ENCODE measurements at regions of chr11 and their contacts with region 1.

Region 1: GRCh38 chr11:129895126-129896041 is at the start of gene NFRKB:
- DNase-seq: peak; percentile 75 to 95 (median 88)
- ATAC-seq: peak; percentile 99
- H3K4me3 ChIP-seq: peak within 1 kb of the TSS; percentile 76
- H3K4me3 Mint-ChIP-seq: peak within 1 kb of the TSS; percentile 86 to 96 (median 92)
- H3K27ac ChIP-seq: peak within 1 kb of the TSS; percentile 84
- H3K27ac Mint-ChIP-seq: peak within 1 kb of the TSS; percentile 82 to 95 (median 90)
- H3K4me1 ChIP-seq: peaks cover 9 to 18% of the 10 kb centered on the region in 2 donors
- H3K4me1 Mint-ChIP-seq: peaks cover 23 to 58% (median 44%) of the 10 kb centered on the region in 7 donors
- H3K27me3 ChIP-seq: no peaks in the 10 kb centered on the region
- H3K27me3 Mint-ChIP-seq: no peaks in the 10 kb centered on the region
- total RNA-seq, gene NFRKB: 40.4 to 81.3 (median 56.2) TPM

Region 2: DNA sequence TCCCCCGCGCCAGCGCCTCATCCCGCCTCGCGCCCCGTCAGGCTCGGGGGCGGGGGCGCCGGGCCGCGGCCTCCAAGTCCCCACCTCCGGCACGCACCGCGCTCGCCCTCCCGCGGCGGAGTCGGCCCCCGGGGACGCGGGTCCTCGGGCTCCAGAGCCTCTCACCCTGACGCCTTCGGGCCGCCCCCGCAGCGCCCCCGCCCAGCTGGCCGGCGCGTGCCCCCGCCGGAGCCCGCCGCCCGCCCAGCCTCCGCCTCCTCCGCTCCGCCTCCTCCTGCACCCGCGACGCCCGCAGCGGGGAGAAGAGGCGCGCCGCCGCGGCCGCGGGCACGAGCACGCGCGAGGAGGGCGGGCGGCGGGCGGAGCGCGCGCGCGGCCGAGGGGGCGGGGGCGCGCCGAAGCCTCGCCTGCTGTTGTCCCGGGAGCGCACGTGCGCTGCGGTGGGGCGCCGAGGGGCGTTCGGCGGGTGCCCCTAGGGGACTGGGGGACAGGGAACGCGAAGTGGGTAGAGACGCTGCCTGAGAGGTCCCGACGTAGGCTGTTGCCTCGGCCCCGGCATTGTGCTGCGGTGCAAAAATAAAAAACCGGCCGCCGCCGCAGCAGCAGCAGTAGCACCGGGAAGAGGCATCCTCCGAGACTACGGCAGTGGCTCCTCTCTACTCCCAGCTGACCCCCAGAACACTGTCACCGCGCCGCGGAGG is 615.9 kb before region 1 on chr11:
- CTCF ChIA-PET with region 1: no interaction called
- POLR2A ChIA-PET with region 1: no interaction called
- intact Hi-C with region 1: loop called (anchors 2 kb)
- DNase-seq: peak; percentile 70 to 90 (median 82)
- ATAC-seq: peak; percentile 94
- H3K4me3 ChIP-seq: peak overlapping the region; percentile 58
- H3K4me3 Mint-ChIP-seq: peak overlapping the region; percentile 74 to 91 (median 86)
- H3K27ac ChIP-seq: peak overlapping the region; percentile 49
- H3K27ac Mint-ChIP-seq: peak overlapping the region; percentile 69 to 91 (median 80)
- H3K4me1 ChIP-seq: peaks cover 4 to 6% of the 10 kb centered on the region in 2 donors
- H3K4me1 Mint-ChIP-seq: peaks cover 14 to 43% (median 33%) of the 10 kb centered on the region in 7 donors
- H3K27me3 ChIP-seq: peaks cover 0 to 3% of the 10 kb centered on the region in 2 donors
- H3K27me3 Mint-ChIP-seq: peaks cover 8 to 32% (median 17%) of the 10 kb centered on the region in 5 donors

Region 3: DNA sequence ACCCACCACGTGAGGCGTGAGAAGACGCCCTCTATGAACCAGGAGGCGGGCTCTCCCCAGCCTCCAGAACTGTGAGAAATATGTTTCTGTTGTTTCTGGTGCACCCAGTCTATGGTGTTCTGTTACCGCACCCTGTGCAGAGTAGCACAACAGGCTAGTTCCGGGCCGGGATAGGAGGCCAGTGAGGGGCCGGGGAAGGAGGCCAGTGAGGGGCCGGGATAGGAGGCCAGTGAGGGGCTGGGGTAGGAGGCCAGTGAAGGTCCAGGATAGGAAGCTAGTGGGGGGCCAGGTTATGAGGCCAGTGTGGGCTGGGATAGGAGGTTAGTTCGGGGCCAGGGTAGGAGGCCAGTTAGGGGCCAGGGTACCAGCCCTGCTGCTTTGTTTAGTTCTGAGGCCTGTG is 315.1 kb before region 1 on chr11:
- CTCF ChIA-PET with region 1: no interaction called
- POLR2A ChIA-PET with region 1: no interaction called
- intact Hi-C with region 1: no loop called
- DNase-seq: no peak
- ATAC-seq: peak; percentile 31
- H3K4me3 ChIP-seq: no peak overlapping the region
- H3K4me3 Mint-ChIP-seq: no peak overlapping the region
- H3K27ac ChIP-seq: no peak overlapping the region
- H3K27ac Mint-ChIP-seq: no peak overlapping the region
- H3K4me1 ChIP-seq: no peaks in the 10 kb centered on the region
- H3K4me1 Mint-ChIP-seq: peaks cover 0 to 4% (median 0%) of the 10 kb centered on the region in 7 donors
- H3K27me3 ChIP-seq: no peaks in the 10 kb centered on the region
- H3K27me3 Mint-ChIP-seq: peaks cover 0 to 24% (median 15%) of the 10 kb centered on the region in 5 donors

Region 4: GRCh38 chr11:129803533-129803932 is 91.9 kb before region 1 on chr11:
- CTCF ChIA-PET with region 1: no interaction called
- POLR2A ChIA-PET with region 1: interaction called, 4 read pairs
- intact Hi-C with region 1: loop called in 1 of 2 experiments (anchors 2 kb)
- DNase-seq: no peak
- ATAC-seq: no peak
- H3K4me3 ChIP-seq: no peak overlapping the region
- H3K4me3 Mint-ChIP-seq: peak overlapping the region; percentile 64 to 85 (median 78)
- H3K27ac ChIP-seq: peak overlapping the region; percentile 17
- H3K27ac Mint-ChIP-seq: peak overlapping the region; percentile 44 to 99 (median 91)
- H3K4me1 ChIP-seq: peaks cover 0 to 31% of the 10 kb centered on the region in 2 donors
- H3K4me1 Mint-ChIP-seq: peaks cover 25 to 90% (median 73%) of the 10 kb centered on the region in 7 donors
- H3K27me3 ChIP-seq: no peaks in the 10 kb centered on the region
- H3K27me3 Mint-ChIP-seq: peaks cover 0 to 37% (median 0%) of the 10 kb centered on the region in 5 donors

Region 5: DNA sequence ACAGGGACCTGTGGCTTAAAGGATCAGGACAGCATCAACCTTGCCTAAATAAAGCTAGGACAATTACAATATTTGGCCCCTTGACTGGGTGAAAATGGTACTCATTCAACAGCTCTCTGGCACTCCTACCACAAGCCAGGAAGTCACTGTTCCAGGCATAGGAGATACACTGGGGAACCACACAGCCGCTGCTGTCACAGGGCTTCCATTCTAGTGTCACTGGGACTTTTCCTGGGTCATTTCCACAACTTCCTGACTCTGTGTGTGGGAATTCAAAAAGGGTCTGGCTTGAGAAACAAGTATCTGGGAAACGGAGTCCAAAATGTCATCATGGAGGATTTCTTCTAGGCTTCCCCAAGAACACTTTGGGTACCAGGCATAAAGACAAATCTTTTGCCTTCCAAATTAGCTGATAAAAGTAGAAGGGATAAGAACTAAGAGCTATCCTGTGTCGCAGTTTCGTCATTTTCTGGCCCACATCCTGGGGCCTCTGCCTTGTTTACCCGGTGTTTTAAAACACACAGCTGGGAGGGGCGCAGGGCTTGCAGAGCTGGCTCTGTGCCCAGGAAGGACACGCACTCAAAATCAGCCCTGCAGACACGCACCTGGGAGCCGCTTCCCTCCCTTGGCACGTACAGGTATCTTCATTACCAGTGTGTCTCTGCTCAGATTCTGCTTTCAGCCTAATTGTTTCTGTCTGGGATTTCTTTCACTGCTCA is 41.7 kb before region 1 on chr11:
- CTCF ChIA-PET with region 1: interaction called, 3 read pairs
- POLR2A ChIA-PET with region 1: interaction called, 14 read pairs
- intact Hi-C with region 1: loop called (anchors 1 to 2 kb)
- DNase-seq: peak; percentile 34 to 96 (median 93)
- ATAC-seq: peak; percentile 94
- H3K4me3 ChIP-seq: peak overlapping the region; percentile 21
- H3K4me3 Mint-ChIP-seq: peak overlapping the region; percentile 49 to 84 (median 74)
- H3K27ac ChIP-seq: peak overlapping the region; percentile 68
- H3K27ac Mint-ChIP-seq: peak overlapping the region; percentile 94 to 99 (median 98)
- H3K4me1 ChIP-seq: peaks cover 14 to 24% of the 10 kb centered on the region in 2 donors
- H3K4me1 Mint-ChIP-seq: peaks cover 17 to 68% (median 51%) of the 10 kb centered on the region in 7 donors
- H3K27me3 ChIP-seq: no peaks in the 10 kb centered on the region
- H3K27me3 Mint-ChIP-seq: peaks cover 0 to 2% (median 0%) of the 10 kb centered on the region in 5 donors

Region 6: GRCh38 chr11:129881570-129882170 is 13.7 kb before region 1 on chr11:
- CTCF ChIA-PET with region 1: interaction called, 3 read pairs
- POLR2A ChIA-PET with region 1: interaction called, 13 read pairs
- intact Hi-C with region 1: loop called in 1 of 2 experiments (anchors 2 kb)
- DNase-seq: peak; percentile 24 to 54 (median 44)
- ATAC-seq: peak; percentile 71
- H3K4me3 ChIP-seq: no peak overlapping the region
- H3K4me3 Mint-ChIP-seq: no peak overlapping the region
- H3K27ac ChIP-seq: no peak overlapping the region
- H3K27ac Mint-ChIP-seq: peak overlapping the region in 2 of 9 donors; percentile 56 to 63
- H3K4me1 ChIP-seq: no peaks in the 10 kb centered on the region
- H3K4me1 Mint-ChIP-seq: peaks cover 0 to 20% (median 4%) of the 10 kb centered on the region in 7 donors
- H3K27me3 ChIP-seq: no peaks in the 10 kb centered on the region
- H3K27me3 Mint-ChIP-seq: no peaks in the 10 kb centered on the region

Region 7: DNA sequence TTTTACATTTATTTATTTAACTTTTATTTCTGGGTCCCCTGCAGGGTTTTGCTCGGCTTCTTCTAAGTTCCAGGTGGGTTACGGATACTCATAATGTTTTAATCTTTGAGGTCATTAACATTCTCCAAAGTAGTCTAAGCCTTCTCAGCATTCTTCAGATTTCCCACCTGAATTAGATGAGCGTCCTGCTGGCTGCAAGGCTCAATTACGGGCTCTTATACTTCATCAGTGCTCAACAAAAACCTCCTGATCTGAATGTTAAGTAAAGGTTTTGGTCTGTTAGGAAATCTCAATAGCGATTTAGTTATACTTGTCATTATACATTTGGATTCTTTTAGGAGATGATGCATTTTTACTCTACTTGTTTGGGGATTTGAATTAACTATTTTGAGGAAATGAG is 27.3 kb after region 1 on chr11:
- CTCF ChIA-PET with region 1: interaction called, 5 read pairs
- POLR2A ChIA-PET with region 1: interaction called, 4 read pairs
- intact Hi-C with region 1: loop called (anchors 2 kb)
- DNase-seq: peak in 1 of 9 donors; percentile 0
- ATAC-seq: no peak
- H3K4me3 ChIP-seq: no peak overlapping the region
- H3K4me3 Mint-ChIP-seq: peak overlapping the region in 1 of 10 donors; percentile 35
- H3K27ac ChIP-seq: no peak overlapping the region
- H3K27ac Mint-ChIP-seq: peak overlapping the region in 7 of 9 donors; percentile 13 to 58 (median 28)
- H3K4me1 ChIP-seq: peaks cover 0 to 4% of the 10 kb centered on the region in 2 donors
- H3K4me1 Mint-ChIP-seq: peaks cover 6 to 22% (median 18%) of the 10 kb centered on the region in 7 donors
- H3K27me3 ChIP-seq: no peaks in the 10 kb centered on the region
- H3K27me3 Mint-ChIP-seq: no peaks in the 10 kb centered on the region

Region 8: GRCh38 chr11:130916238-130916855 is 1021.0 kb after region 1 on chr11 and contains the start of gene SNX19:
- CTCF ChIA-PET with region 1: no interaction called
- POLR2A ChIA-PET with region 1: interaction called, 3 read pairs
- intact Hi-C with region 1: loop called (anchors 1 to 2 kb)
- DNase-seq: peak; percentile 83 to 96 (median 89)
- ATAC-seq: peak; percentile 100
- H3K4me3 ChIP-seq: peak within 1 kb of the TSS; percentile 54
- H3K4me3 Mint-ChIP-seq: peak within 1 kb of the TSS; percentile 83 to 91 (median 88)
- H3K27ac ChIP-seq: peak within 1 kb of the TSS; percentile 84
- H3K27ac Mint-ChIP-seq: peak within 1 kb of the TSS; percentile 85 to 95 (median 92)
- H3K4me1 ChIP-seq: peaks cover 9 to 16% of the 10 kb centered on the region in 2 donors
- H3K4me1 Mint-ChIP-seq: peaks cover 5 to 53% (median 40%) of the 10 kb centered on the region in 7 donors
- H3K27me3 ChIP-seq: no peaks in the 10 kb centered on the region
- H3K27me3 Mint-ChIP-seq: peaks cover under 1 to 12% (median 10%) of the 10 kb centered on the region in 5 donors
- total RNA-seq, gene SNX19: 53.9 to 101 (median 57.1) TPM

Measured in naive thymus-derived CD4-positive, alpha-beta T cell (primary cell).